Left lung (tissue), 14 donors: ENCODE measurements at regions of chr6 and their contacts with region 1.

Region 1: DNA sequence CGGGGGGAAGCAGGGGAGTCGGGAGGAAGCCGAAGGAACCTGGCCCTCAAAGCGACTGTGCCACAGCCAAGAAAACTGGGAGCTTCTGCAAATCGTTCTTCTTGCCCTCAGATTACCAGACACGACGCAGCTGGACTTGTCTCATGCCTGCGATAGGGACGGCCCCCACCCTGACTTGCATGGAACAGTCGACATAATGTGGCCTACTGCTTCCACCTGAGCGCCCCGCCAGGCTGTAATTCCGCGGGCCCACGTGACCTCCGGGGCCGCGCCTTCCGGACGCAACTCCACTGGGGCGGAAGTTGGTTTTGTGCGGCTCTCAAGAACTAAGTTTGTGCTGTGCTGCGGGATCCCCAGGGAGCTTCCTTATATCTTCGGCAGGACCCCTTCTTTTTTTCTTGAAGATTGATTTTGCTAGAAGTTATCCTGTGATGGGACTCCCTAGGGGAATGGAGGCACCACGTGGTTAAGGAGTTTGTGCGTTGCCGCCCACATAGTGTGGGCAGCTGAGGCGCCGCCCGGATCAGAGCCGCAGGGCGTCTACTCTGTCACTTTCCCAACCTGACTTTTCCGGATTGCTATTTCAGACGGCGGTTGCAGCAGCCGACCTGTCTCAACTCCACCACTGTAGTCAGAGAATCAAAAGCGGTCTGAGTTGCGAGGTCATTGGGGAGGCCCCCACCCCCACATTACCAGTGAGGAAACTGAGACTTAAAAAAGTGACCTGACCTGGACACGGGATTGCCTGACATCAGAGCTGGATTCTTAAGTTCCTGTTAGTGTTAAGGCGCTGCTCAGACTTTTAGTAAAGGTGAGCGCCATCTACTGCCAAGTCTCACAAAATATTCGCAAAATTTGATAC is 540 bp upstream of the CD164 start:
- DNase-seq: peak; percentile 95 to 99 (median 96)
- ATAC-seq: peak; percentile 88
- H3K4me3 ChIP-seq: peak overlapping the region; percentile 83 to 93
- H3K27ac ChIP-seq: peak overlapping the region; percentile 100
- H3K4me1 ChIP-seq: peaks cover 19 to 53% of the 10 kb centered on the region in 2 donors
- H3K27me3 ChIP-seq: no peaks in the 10 kb centered on the region
- CTCF ChIP-seq: peak in 1 of 2 donors; percentile 31

Region 2: GRCh38 chr6:109187399-109188114 is 195.2 kb before region 1 on chr6:
- intact Hi-C with region 1: loop called in 1 of 2 experiments (anchors 10 kb)
- DNase-seq: peak in 2 of 4 donors; percentile 41 to 60
- ATAC-seq: peak; percentile 98
- H3K4me3 ChIP-seq: no peak overlapping the region
- H3K27ac ChIP-seq: no peak overlapping the region
- H3K4me1 ChIP-seq: peaks cover 0 to 5% of the 10 kb centered on the region in 2 donors
- H3K27me3 ChIP-seq: no peaks in the 10 kb centered on the region
- CTCF ChIP-seq: peak; percentile 77 to 92